ENCODE measurements at regions of chr16 and their contacts with region 1.

Region 1: GRCh38 chr16:68426351-68426660 is 22.0 kb downstream of the SMPD3 start:
- DNase-seq: no peak
- ATAC-seq: no peak
- H3K4me3 Mint-ChIP-seq: no peak overlapping the region
- H3K27ac Mint-ChIP-seq: no peak overlapping the region
- H3K4me1 Mint-ChIP-seq: 0 out of 2 replicates have a peak, but pooled peaks cover 6% of the 10 kb centered on the region
- H3K27me3 Mint-ChIP-seq: no peaks in the 10 kb centered on the region; the same call in 1 of the 2 replicates
- CTCF ChIP-seq: no peak

Region 2: DNA sequence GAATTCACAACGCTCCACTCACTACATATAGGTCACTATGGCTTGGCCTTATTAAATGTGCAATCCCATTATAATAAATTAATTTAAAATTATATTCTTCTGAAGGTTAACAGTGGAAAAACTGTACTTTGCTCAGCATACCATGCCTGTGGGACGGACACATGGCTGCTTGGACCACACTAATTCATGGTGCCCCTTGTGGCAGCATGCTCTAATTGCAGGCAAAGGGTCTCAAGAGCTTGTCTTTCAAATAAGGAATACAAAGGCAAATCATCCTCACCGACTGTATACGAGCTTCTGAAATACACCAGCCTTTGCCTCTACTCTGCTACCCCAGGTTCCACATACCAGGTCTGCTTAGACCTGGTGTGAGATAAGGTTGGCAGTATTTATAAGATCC is 10.3 kb after region 1 on chr16:
- CTCF ChIA-PET with region 1: interaction called, 15 read pairs
- POLR2A ChIA-PET with region 1: no interaction called
- DNase-seq: peak; percentile 63
- ATAC-seq: peak; percentile 48
- H3K4me3 Mint-ChIP-seq: no peak overlapping the region
- H3K27ac Mint-ChIP-seq: no peak overlapping the region
- H3K4me1 Mint-ChIP-seq: peaks cover 4% of the 10 kb centered on the region; the same call in 1 of the 2 replicates
- H3K27me3 Mint-ChIP-seq: peaks cover 26% of the 10 kb centered on the region
- CTCF ChIP-seq: peak; percentile 55

Region 3: DNA sequence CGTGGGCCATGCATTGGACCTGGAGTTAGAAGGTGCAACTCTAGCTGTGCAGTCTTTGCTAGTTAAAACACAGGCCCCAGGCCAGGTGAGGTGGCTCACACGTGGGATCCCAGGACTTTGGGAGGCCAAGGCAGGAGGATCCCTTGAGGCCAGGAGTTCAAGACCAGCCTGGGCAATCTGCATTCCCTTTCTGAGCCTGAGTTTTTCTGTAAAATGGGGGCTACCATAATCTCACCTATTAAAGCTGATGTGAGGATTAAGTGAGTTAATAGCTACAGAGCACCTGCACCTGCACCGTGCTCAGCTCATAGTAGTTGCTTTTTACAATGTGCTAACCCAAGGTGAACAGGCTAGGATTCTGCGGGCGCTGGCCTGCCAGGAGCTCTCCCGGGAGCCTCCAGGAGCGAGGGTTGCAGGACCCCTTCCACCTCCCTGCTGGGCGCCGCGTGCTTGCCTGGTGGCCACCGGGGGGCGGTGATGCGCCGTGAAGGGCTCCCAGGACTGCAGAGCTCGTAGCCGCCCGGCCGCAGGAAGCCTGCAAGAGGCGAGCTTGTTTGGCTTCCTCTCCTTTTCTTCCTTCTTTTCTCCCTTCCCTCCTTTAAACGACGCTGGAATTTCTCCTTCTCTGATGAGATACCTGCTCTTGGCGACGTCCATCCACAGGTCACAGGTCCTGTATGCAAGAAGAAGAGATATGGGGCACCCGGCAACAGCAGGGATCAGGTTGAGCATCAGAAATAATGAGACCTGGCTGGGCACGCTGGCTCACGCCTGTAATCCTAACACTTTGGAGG is 164.1 kb after region 1 on chr16:
- CTCF ChIA-PET with region 1: no interaction called
- POLR2A ChIA-PET with region 1: no interaction called
- DNase-seq: peak; percentile 94
- ATAC-seq: peak; percentile 99
- H3K4me3 Mint-ChIP-seq: peak overlapping the region; percentile 34; the same call in 1 of the 2 replicates
- H3K27ac Mint-ChIP-seq: peak overlapping the region; percentile 71; the same call in 1 of the 2 replicates
- H3K4me1 Mint-ChIP-seq: peaks cover 11% of the 10 kb centered on the region
- H3K27me3 Mint-ChIP-seq: peaks cover 3% of the 10 kb centered on the region
- CTCF ChIP-seq: peak; percentile 81